ENCODE measurements at regions of chr19 and their contacts with region 1.

Region 1: DNA sequence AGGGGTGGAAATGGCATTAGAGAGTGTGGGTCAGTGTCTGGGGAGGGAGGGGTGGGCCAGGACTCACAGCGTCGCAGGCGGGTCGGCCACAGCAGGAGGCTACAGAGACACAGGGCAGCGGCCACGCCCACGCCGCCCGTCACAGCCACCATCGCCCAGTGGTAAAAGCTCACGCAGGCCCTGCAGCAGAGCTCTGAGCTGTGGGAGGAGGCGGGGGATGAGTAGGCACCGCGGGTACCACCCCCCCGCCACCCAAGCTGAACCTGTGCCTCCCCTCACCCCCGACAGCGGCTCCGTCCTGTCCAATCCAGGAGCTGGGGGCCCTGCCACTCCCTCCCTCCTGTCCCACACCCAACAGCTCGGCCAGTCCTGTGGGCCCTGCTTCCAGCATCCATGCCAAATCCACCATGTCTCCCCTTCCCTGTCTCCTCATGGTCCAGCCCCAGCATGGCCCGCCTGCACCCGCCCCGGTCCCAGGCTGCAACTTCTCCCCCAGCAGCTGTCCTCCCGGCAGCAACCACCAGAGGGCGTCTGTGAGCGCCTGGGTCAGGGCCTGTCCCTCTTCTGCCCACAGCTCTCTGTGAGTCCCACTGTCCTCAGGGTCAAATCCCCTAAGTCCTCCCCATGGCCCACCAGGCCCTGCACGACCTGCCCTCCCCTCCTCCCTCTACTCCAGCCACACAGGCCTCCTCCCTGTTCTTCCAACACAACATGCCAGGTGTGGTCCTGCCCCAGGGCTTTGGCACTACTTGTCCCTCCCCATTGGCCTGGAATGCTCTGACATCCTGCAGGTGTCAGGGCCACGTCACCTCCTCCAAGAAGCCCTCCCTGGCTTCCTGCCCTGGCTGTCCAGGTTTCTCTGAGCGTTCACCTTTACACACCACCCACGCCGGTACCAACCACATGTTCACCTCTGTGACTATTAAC is 6.0 kb downstream of the TEKTIP1 start:
- DNase-seq: peak; percentile 66
- H3K4me3 Mint-ChIP-seq: no peak overlapping the region
- H3K27ac Mint-ChIP-seq: peak overlapping the region; percentile 26
- H3K4me1 Mint-ChIP-seq: peaks cover 2% of the 10 kb centered on the region
- H3K27me3 Mint-ChIP-seq: no peaks in the 10 kb centered on the region

Region 2: DNA sequence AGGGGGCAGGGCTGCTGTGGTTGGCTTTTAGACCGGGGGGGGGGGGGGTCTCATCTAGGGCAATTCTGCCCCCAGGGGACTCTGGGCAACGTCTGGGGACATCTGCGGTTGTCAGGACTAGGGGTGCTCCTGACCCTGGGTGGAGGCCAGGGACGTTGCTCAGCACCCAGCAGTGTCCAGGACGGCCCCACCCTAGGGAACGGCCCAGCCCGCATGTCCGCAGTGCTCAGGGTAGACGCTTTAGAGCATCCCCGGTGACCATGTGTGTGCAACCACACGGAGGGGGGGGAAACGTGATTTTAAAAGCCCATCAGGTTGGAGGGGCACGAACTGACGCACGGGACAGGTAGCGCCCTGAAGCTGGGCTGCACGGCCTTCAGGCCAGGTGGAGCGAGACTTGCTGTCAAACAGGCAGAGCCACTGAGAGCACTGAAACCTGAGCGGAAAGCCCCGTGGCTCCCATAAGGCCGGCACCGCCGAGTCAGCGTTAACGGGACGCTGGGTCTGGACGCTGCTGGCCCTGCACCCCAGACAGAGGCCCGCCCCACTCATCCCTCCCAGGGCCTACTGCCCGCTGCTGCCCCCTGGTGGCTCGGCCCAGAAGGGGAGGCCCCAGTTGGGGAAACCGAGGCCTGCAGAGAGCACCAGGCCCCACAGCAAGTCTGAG is 73.3 kb after region 1 on chr19:
- intact Hi-C with region 1: loop called (anchors 2 kb)
- DNase-seq: peak; percentile 33
- H3K4me3 Mint-ChIP-seq: no peak overlapping the region
- H3K27ac Mint-ChIP-seq: no peak overlapping the region
- H3K4me1 Mint-ChIP-seq: peaks cover 7% of the 10 kb centered on the region
- H3K27me3 Mint-ChIP-seq: no peaks in the 10 kb centered on the region

Region 3: GRCh38 chr19:4208385-4209094 is 663.5 kb after region 1 on chr19:
- intact Hi-C with region 1: no loop called
- DNase-seq: no peak
- H3K4me3 Mint-ChIP-seq: no peak overlapping the region
- H3K27ac Mint-ChIP-seq: no peak overlapping the region
- H3K4me1 Mint-ChIP-seq: peaks cover 2% of the 10 kb centered on the region
- H3K27me3 Mint-ChIP-seq: peaks cover 1% of the 10 kb centered on the region